Adrenal gland (tissue), 19 donors: ENCODE measurements at regions of chr2 and their contacts with region 1.

Region 1: DNA sequence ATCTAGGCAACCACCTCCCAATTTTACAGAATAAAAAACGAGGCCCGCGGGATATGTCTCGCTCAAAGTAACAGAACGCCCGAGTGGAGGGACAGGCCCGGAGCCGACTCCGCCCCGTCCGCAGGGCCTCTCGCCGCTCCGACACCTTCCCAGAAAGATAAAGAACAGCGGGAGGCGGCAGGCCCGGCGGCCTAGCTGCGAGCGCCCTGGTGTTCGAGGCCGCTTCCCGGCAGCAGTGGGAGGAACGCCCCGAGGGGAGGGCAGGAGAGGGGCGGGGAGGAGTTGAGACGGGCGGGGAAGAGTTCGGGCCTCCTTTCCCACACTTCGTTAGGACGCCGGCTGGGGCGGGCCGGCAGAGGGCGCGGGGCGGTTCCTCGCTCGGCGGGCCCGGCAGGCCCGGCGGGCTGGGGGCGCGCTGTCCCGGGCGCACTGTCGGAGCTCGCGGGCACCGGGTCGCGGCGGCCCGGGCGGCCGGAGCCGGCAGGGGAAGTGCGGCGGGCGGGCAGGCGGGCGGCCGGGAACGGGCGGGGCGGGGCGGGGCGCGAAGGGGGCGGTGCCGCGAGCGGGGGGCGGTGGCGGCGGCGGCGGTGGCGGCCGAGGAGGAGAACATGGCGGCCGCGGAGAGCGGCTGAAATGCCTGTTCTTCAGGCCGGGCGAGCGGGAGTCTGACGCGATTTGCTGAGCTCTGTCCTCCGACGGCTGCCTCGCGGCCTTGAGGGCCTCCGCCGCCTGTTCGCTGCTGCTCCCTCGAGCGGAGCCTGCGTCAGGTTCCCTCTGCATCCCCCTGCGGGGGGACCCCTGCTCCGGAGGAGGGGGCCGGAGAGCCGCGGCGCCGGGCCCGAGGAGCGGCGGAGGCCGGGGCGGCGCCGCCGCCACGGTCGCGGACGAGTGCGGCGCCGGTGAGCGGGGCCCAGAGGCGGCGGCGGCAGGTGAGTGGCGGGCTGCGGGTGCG is at the start of gene NCOA1:
- DNase-seq: peak; percentile 89 to 93 (median 91)
- H3K4me3 ChIP-seq: peak within 1 kb of the TSS in 3 of 4 donors; percentile 68 to 98 (median 93)
- H3K27ac ChIP-seq: peak within 1 kb of the TSS; percentile 61 to 99 (median 84)
- H3K4me1 ChIP-seq: peaks cover 7 to 34% of the 10 kb centered on the region in 2 donors
- H3K27me3 ChIP-seq: no peaks in the 10 kb centered on the region
- CTCF ChIP-seq: peak in 3 of 6 experiments; percentile 16 to 30 (median 19)
- POLR2A ChIP-seq: peak; percentile 19 to 49
- total RNA-seq, gene NCOA1: 41.0 to 85.5 (median 56.4) TPM

Region 2: DNA sequence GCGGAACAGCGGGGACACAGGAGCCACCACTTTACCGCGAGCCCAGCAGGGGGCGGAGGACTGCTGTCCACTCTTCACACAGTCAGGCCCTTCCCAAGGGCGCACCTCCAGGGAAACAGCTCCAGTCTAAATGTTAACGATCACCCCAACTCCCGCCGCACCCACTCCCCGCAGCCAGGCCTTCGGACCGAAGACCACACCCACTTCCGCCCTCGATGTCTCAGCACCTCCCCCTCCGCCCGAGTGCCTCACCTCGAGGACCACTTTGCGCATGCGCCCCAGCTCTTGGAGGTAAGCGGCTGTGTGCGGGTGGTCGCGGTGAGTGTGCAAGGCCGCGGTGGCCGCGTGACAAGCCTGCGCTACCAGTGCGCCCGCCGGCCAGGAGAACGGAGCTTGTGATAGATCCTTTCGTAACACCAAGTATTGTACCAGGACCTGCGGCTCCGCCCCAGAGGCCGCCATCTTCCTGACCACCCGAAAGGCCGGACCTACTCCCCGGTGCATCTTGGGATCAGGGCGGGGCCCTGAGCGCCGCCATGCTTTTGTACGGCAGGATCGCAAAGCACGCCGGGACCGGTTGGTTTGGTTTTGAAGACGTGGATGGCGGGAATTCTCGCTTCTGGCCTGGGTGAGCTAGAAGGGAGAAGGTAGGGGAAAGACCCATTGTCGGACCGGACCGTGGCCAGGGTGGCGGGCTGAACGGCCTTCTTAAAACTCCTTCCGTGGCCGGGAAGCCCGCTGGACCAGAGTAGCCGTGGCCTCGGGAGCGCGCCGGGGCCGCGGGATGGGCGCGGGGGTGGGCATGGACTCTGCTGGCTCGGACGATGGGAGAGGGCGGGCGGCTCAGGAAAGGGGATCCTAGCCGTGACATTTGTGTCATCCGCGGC is 302.2 kb after region 1 on chr2 and contains the starts of genes CENPO and PTRHD1:
- intact Hi-C with region 1: loop called in 1 of 2 experiments (anchors 10 kb)
- DNase-seq: peak; percentile 95 to 98 (median 97)
- H3K4me3 ChIP-seq: peak within 1 kb of the TSS; percentile 67 to 86 (median 82)
- H3K27ac ChIP-seq: peak within 1 kb of the TSS; percentile 92 to 98 (median 97)
- H3K4me1 ChIP-seq: peaks cover 0 to 18% of the 10 kb centered on the region in 2 donors
- H3K27me3 ChIP-seq: no peaks in the 10 kb centered on the region
- CTCF ChIP-seq: peak; percentile 41 to 77 (median 70)
- POLR2A ChIP-seq: peak; percentile 30 to 72
- total RNA-seq, gene CENPO: 6.6 to 16.6 (median 10.2) TPM
- total RNA-seq, gene PTRHD1: 36.9 to 87.3 (median 59.3) TPM

Region 3: DNA sequence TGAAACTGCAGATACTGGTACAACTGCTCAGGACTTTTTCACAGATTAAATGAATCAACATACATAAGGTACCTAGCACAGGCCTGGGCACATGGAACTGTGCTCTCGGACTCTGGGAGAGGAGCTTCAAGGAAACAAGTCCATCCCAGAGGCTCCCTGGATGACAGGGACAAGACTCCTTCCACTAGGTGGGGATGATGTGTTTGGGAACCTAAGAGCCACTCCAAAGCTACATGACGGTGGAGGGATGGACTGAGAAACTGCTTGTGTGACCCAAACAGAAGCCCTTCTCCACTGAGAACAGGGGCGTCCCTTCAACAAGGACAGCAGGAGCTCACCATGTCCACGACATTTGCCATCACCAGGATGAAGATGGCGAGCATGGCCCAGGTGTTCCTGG is 339.4 kb after region 1 on chr2:
- intact Hi-C with region 1: no loop called
- DNase-seq: peak in 1 of 7 donors; percentile 9
- H3K4me3 ChIP-seq: no peak overlapping the region
- H3K27ac ChIP-seq: no peak overlapping the region
- H3K4me1 ChIP-seq: peaks cover 0 to 8% of the 10 kb centered on the region in 2 donors
- H3K27me3 ChIP-seq: no peaks in the 10 kb centered on the region
- CTCF ChIP-seq: peak in 1 of 6 experiments; percentile 7
- POLR2A ChIP-seq: no peak